ENCODE measurements at regions of chr2 and their contacts with region 1.

Region 1: DNA sequence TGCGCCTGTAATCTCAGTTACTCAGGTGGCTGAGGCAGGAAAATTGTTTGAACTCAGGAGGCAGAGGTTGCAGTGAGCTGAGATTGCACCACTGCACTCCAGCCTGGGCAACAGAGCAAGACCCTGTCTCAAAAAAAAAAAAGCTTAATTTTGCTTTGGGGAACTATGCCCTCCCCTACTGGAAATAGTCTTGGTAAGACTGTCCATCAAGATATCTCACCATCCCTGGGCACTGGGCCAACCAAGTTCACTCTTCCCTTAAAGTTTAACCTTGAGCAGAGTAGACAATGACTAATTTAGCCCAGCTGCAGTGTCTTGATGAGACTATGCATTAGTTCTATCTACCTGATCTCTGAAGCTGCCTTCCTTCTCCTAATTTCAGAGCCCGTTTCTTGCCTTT is 44.7 kb downstream of the ASXL2 start:
- DNase-seq: no peak
- H3K4me3 Mint-ChIP-seq: no peak overlapping the region
- H3K27ac Mint-ChIP-seq: no peak overlapping the region
- H3K4me1 Mint-ChIP-seq: peaks cover 24% of the 10 kb centered on the region
- H3K27me3 Mint-ChIP-seq: no peaks in the 10 kb centered on the region
- CTCF ChIP-seq: no peak

Region 2: DNA sequence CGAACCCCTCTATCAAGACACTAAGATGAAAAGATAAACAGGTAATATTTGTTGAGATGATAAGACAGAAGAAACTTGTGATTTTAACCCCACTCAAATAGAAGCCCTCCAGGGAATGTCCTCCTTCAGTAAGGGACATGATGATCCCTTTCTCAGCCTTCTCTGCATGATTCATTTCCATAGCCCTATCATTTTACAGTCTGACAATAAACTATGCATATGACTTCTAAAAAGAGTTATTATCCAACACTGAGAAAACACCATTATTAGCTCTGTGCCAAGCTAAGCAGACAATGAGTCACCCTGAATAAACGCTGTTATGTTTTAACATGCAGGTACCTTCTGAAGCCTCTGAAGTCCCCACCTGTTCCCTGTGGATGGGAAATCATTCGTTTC is 214.9 kb before region 1 on chr2:
- CTCF ChIA-PET with region 1: no interaction called
- intact Hi-C with region 1: loop called (anchors 10 kb)
- DNase-seq: peak; percentile 17
- H3K4me3 Mint-ChIP-seq: peak overlapping the region; percentile 33
- H3K27ac Mint-ChIP-seq: peak overlapping the region; percentile 57
- H3K4me1 Mint-ChIP-seq: peaks cover 51% of the 10 kb centered on the region
- H3K27me3 Mint-ChIP-seq: no peaks in the 10 kb centered on the region
- CTCF ChIP-seq: no peak

Region 3: DNA sequence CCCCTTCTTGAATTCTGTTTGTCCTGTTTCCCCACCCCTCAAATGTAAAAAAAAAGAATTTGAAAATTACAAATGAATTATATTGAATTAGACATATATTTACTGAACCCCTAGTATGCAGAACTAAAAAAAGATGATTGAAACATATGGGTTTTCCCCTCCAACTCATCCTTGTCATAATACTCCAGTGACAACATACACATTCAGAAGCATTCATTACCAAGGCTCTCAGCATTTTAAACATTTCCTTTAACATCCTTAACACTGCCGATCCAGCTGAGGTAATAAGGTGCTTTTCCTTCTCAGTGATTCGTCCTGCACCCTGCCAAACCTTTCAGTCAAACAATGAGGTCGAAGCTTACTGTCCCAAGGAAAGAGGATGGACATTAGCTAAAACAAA is 107.0 kb before region 1 on chr2:
- CTCF ChIA-PET with region 1: no interaction called
- intact Hi-C with region 1: no loop called
- DNase-seq: no peak
- H3K4me3 Mint-ChIP-seq: no peak overlapping the region
- H3K27ac Mint-ChIP-seq: no peak overlapping the region
- H3K4me1 Mint-ChIP-seq: no peaks in the 10 kb centered on the region
- H3K27me3 Mint-ChIP-seq: peaks cover 10% of the 10 kb centered on the region
- CTCF ChIP-seq: no peak

Region 4: GRCh38 chr2:25736899-25737515 is 96.6 kb before region 1 on chr2:
- CTCF ChIA-PET with region 1: no interaction called
- intact Hi-C with region 1: no loop called
- DNase-seq: no peak
- H3K4me3 Mint-ChIP-seq: no peak overlapping the region
- H3K27ac Mint-ChIP-seq: no peak overlapping the region
- H3K4me1 Mint-ChIP-seq: peaks cover 28% of the 10 kb centered on the region
- H3K27me3 Mint-ChIP-seq: no peaks in the 10 kb centered on the region
- CTCF ChIP-seq: no peak

Region 5: GRCh38 chr2:25808006-25808383 is 25.6 kb before region 1 on chr2:
- CTCF ChIA-PET with region 1: no interaction called
- intact Hi-C with region 1: no loop called
- DNase-seq: no peak
- H3K4me3 Mint-ChIP-seq: no peak overlapping the region
- H3K27ac Mint-ChIP-seq: no peak overlapping the region
- H3K4me1 Mint-ChIP-seq: peaks cover 7% of the 10 kb centered on the region
- H3K27me3 Mint-ChIP-seq: no peaks in the 10 kb centered on the region
- CTCF ChIP-seq: no peak

Region 6: GRCh38 chr2:25867396-25868003 is 33.9 kb after region 1 on chr2:
- CTCF ChIA-PET with region 1: interaction called, 12 read pairs
- intact Hi-C with region 1: no loop called
- DNase-seq: no peak
- H3K4me3 Mint-ChIP-seq: no peak overlapping the region
- H3K27ac Mint-ChIP-seq: no peak overlapping the region
- H3K4me1 Mint-ChIP-seq: no peaks in the 10 kb centered on the region
- H3K27me3 Mint-ChIP-seq: no peaks in the 10 kb centered on the region
- CTCF ChIP-seq: no peak

Region 7: DNA sequence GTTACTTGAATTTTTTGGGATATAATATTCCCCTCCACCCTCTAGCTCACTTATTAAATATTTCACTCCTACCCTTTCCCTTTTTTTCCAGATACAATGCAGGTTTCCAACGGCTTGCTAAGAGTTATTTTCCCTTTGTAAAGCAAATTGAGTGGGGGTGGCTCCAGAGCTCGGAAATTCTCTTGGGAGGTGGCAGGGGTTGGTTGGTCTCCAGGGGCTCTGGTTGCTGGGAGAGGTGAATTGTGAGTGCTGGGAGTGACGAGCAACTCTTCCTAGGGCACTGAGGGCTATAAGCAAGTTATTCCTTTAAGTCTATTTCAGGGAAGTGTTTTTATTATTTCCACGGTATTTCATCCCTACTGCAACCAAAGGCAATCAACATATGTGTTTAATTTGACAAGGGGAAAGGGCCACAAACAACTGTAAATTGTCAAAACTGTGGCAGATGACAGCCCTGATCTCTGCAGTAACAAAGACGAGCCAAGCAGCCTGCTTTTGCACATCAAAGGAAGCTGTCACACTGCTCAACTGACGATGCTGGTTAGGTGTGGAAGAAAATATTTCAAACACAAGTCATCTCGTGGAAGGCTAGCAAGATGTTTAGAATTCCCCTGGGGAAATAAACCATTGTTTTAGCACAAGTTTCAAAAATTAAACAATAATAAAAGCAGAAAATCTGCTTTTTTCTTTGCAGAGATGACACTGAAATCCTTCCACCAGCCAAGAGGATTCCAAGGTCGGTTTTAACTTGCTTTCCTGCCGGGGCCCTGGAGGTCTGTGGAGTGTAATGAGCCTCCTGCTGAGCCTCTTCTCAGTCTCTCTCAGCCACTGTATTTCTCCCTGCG is 79.5 kb after region 1 on chr2:
- CTCF ChIA-PET with region 1: no interaction called
- intact Hi-C with region 1: no loop called
- DNase-seq: no peak
- H3K4me3 Mint-ChIP-seq: no peak overlapping the region
- H3K27ac Mint-ChIP-seq: no peak overlapping the region
- H3K4me1 Mint-ChIP-seq: no peaks in the 10 kb centered on the region
- H3K27me3 Mint-ChIP-seq: no peaks in the 10 kb centered on the region
- CTCF ChIP-seq: no peak